Sigmoid colon (tissue), 7 donors: ENCODE measurements at regions of chr14 and their contacts with region 1.

Region 1: GRCh38 chr14:70972107-70972976 is 65.1 kb downstream of the PCNX1 start:
- DNase-seq: peak; percentile 91
- H3K4me3 ChIP-seq: no peak overlapping the region
- H3K27ac ChIP-seq: no peak overlapping the region
- H3K4me1 ChIP-seq: peaks cover 0 to 7% (median 0%) of the 10 kb centered on the region in 4 donors
- H3K27me3 ChIP-seq: no peaks in the 10 kb centered on the region
- CTCF ChIP-seq: peak; percentile 79 to 90 (median 82)
- EP300 ChIP-seq: no peak
- POLR2A ChIP-seq: no peak

Region 2: GRCh38 chr14:70873627-70874026 is 98.7 kb before region 1 on chr14:
- intact Hi-C with region 1: loop called (anchors 5 kb)
- DNase-seq: no peak
- H3K4me3 ChIP-seq: no peak overlapping the region
- H3K27ac ChIP-seq: no peak overlapping the region
- H3K4me1 ChIP-seq: no peaks in the 10 kb centered on the region
- H3K27me3 ChIP-seq: no peaks in the 10 kb centered on the region
- CTCF ChIP-seq: peak in 3 of 4 experiments; percentile 12 to 35 (median 26)
- EP300 ChIP-seq: no peak
- POLR2A ChIP-seq: no peak

Region 3: DNA sequence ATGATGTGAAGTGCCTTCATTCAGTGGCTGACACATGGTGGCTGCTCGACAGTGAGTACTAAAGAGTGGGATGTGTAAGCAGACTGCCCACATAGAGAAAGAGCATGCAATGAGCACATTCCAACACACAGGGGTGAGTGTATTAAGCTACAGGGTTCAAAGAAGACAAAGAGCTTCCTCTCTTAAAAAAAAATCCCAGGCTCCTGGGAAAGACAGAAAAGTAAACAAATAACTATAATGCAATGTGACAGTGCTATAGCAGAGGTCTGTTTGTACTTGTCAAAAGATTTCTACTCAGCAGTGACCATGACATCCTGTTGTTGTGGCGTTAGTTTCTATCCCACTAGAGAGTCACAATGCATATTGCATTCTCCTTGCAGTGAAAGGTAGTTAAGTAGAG is 77.5 kb before region 1 on chr14:
- intact Hi-C with region 1: loop called (anchors 5 kb)
- DNase-seq: no peak
- H3K4me3 ChIP-seq: no peak overlapping the region
- H3K27ac ChIP-seq: peak overlapping the region in 2 of 4 donors; percentile 81 to 87
- H3K4me1 ChIP-seq: peaks cover 0 to 51% (median 33%) of the 10 kb centered on the region in 4 donors
- H3K27me3 ChIP-seq: no peaks in the 10 kb centered on the region
- CTCF ChIP-seq: no peak
- EP300 ChIP-seq: no peak
- POLR2A ChIP-seq: no peak

Region 4: GRCh38 chr14:70907176-70907995 is 65.0 kb before region 1 on chr14 and contains the start of gene PCNX1:
- intact Hi-C with region 1: loop called (anchors 2 kb)
- DNase-seq: peak; percentile 94
- H3K4me3 ChIP-seq: peak within 1 kb of the TSS; percentile 80 to 98 (median 88)
- H3K27ac ChIP-seq: peak within 1 kb of the TSS; percentile 87 to 98 (median 94)
- H3K4me1 ChIP-seq: peaks cover 0 to 61% (median 58%) of the 10 kb centered on the region in 4 donors
- H3K27me3 ChIP-seq: no peaks in the 10 kb centered on the region
- CTCF ChIP-seq: peak; percentile 45 to 88 (median 78)
- EP300 ChIP-seq: no peak
- POLR2A ChIP-seq: peak in 1 of 2 donors; percentile 9
- total RNA-seq, gene PCNX1: 62.8 to 73.9 (median 70.1) TPM

Region 5: DNA sequence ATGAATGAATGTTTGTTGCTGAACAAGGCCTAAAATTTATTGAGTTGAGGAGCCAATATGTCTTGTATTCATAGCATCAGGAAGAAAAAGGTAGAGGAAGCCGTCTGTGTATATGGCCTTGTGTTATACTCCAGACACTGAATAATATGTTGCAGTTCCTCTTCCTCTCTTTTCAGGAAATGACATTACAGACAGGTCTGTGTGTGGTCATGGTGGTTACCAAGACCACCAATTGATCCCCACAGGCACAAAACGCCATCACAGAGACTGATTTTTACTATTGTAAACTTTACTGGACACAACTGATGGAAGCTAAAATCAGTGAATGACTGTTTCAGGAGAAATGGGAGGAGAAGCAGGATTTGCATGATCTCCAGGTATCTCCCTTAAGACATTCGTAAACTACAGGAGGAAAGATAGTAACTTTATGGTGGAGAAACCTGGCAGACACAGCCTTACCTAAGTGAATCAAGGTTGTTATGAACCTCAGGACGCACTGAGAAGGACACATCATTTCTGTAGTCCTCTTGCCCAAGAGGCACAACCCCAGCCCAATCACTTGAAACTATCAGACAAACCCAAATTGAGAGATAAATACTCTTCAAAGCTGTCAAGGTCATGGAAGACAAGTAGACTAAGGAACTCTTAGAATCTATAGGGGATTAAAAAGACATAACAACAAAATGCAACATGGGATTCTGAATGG is 625.8 kb after region 1 on chr14:
- intact Hi-C with region 1: no loop called
- DNase-seq: no peak
- H3K4me3 ChIP-seq: no peak overlapping the region
- H3K27ac ChIP-seq: no peak overlapping the region
- H3K4me1 ChIP-seq: peaks cover 0 to 19% (median 12%) of the 10 kb centered on the region in 4 donors
- H3K27me3 ChIP-seq: no peaks in the 10 kb centered on the region
- CTCF ChIP-seq: no peak
- EP300 ChIP-seq: no peak
- POLR2A ChIP-seq: no peak

Region 6: GRCh38 chr14:72284176-72284575 is 1311.8 kb after region 1 on chr14:
- intact Hi-C with region 1: no loop called
- DNase-seq: no peak
- H3K4me3 ChIP-seq: no peak overlapping the region
- H3K27ac ChIP-seq: no peak overlapping the region
- H3K4me1 ChIP-seq: no peaks in the 10 kb centered on the region
- H3K27me3 ChIP-seq: no peaks in the 10 kb centered on the region
- CTCF ChIP-seq: no peak
- EP300 ChIP-seq: no peak
- POLR2A ChIP-seq: no peak